ENCODE measurements at regions of chr2 and their contacts with region 1.

Region 1: GRCh38 chr2:118003396-118003824 is 10.5 kb downstream of the CCDC93 start:
- DNase-seq: peak in 11 of 14 experiments; percentile 2 to 86 (median 34)
- ATAC-seq: peak; percentile 97
- H3K4me3 ChIP-seq: no peak overlapping the region
- H3K4me3 Mint-ChIP-seq: no peak overlapping the region
- H3K27ac ChIP-seq: no peak overlapping the region
- H3K27ac Mint-ChIP-seq: peak overlapping the region; percentile 7
- H3K4me1 ChIP-seq: peaks cover 10% of the 10 kb centered on the region
- H3K4me1 Mint-ChIP-seq: peaks cover 17% of the 10 kb centered on the region
- H3K27me3 ChIP-seq: no peaks in the 10 kb centered on the region
- H3K27me3 Mint-ChIP-seq: no peaks in the 10 kb centered on the region
- CTCF ChIP-seq: peak; percentile 90

Region 2: GRCh38 chr2:117987121-117987520 is 16.3 kb before region 1 on chr2:
- CTCF ChIA-PET with region 1: interaction called, 10 read pairs
- POLR2A ChIA-PET with region 1: interaction called, 5 read pairs
- intact Hi-C with region 1: no loop called
- DNase-seq: no peak
- ATAC-seq: no peak
- H3K4me3 ChIP-seq: no peak overlapping the region
- H3K4me3 Mint-ChIP-seq: no peak overlapping the region
- H3K27ac ChIP-seq: no peak overlapping the region
- H3K27ac Mint-ChIP-seq: peak overlapping the region; percentile 17
- H3K4me1 ChIP-seq: no peaks in the 10 kb centered on the region
- H3K4me1 Mint-ChIP-seq: peaks cover 4% of the 10 kb centered on the region
- H3K27me3 ChIP-seq: no peaks in the 10 kb centered on the region
- H3K27me3 Mint-ChIP-seq: no peaks in the 10 kb centered on the region
- CTCF ChIP-seq: no peak

Region 3: DNA sequence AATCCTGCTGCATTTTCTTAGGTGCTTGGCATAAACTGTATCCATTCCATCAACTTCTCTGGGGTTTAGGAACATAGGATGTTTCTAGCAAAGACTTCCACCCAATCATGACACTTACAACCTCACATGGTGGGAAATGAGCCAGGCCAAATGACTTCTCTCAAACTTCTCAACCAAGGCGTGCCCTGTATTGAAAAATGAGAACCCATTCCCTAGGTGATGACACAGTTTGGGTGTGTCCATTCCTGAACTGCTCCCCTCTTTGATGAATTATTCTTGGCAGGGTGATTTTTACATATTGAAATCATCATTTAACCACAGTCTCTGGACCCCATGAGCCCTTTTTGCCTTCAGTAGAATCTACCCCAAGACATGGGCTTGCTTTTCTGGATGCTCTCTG is 683.0 kb after region 1 on chr2:
- CTCF ChIA-PET with region 1: no interaction called
- POLR2A ChIA-PET with region 1: no interaction called
- intact Hi-C with region 1: no loop called
- DNase-seq: no peak
- ATAC-seq: no peak
- H3K4me3 ChIP-seq: no peak overlapping the region
- H3K4me3 Mint-ChIP-seq: no peak overlapping the region
- H3K27ac ChIP-seq: no peak overlapping the region
- H3K27ac Mint-ChIP-seq: no peak overlapping the region
- H3K4me1 ChIP-seq: no peaks in the 10 kb centered on the region
- H3K4me1 Mint-ChIP-seq: no peaks in the 10 kb centered on the region
- H3K27me3 ChIP-seq: peaks cover 0 to 2% of the 10 kb centered on the region in 2 experiments
- H3K27me3 Mint-ChIP-seq: peaks cover 28% of the 10 kb centered on the region
- CTCF ChIP-seq: no peak